ENCODE measurements at regions of chr5 and their contacts with region 1.

Region 1: DNA sequence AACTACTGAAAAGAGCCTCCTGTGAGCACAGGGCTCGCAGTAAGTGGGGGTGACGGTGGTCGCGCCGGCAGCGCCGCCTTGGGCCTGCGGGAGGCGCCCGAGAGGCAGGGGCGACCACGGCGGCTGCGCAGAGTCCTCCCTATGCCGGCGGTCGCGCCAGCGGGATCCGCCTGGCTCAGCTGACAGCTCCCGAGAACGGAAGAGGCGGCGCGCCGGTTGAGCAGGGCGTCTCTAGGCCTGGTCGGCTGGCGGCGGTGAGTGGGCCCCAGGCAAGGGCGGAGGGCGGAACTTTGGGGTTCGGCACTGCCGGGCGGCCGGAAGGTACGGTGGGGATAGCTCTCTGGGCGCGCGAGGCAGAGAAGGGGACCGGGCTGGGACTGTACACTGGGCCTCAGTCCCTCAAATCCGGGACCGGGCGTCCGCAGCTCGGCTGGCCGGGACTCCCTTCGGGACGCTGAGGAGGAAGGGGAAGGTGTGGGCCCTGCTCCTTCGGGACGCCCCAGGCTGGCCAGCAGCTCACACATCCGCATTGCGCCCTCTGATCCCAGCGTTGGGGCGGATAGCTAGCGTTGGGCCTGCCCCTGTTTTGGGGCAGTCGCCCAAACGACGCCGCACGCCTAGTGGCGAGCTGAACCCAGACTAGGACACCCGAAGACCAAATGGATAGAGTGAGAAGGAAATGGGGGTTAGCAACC is at the start of gene RNF14:
- DNase-seq: peak; percentile 92 to 94 (median 93)
- H3K4me3 ChIP-seq: peak within 1 kb of the TSS; percentile 66 to 85
- H3K4me3 Mint-ChIP-seq: peak within 1 kb of the TSS; percentile 87 to 98 (median 94)
- H3K27ac ChIP-seq: peak within 1 kb of the TSS; percentile 96
- H3K27ac Mint-ChIP-seq: peak within 1 kb of the TSS; percentile 97 to 99 (median 98)
- H3K4me1 ChIP-seq: peaks cover 23% of the 10 kb centered on the region
- H3K4me1 Mint-ChIP-seq: peaks cover 20 to 42% (median 30%) of the 10 kb centered on the region in 4 donors
- H3K27me3 ChIP-seq: no peaks in the 10 kb centered on the region
- H3K27me3 Mint-ChIP-seq: no peaks in the 10 kb centered on the region
- total RNA-seq, gene RNF14: 35.4 to 38.5 TPM

Region 2: GRCh38 chr5:141664732-141665461 is 304.2 kb before region 1 on chr5:
- CTCF ChIA-PET with region 1: interaction called, 4 read pairs
- POLR2A ChIA-PET with region 1: no interaction called
- intact Hi-C with region 1: loop called (anchors 2 kb)
- DNase-seq: peak; percentile 58 to 69 (median 59)
- H3K4me3 ChIP-seq: no peak overlapping the region
- H3K4me3 Mint-ChIP-seq: no peak overlapping the region
- H3K27ac ChIP-seq: no peak overlapping the region
- H3K27ac Mint-ChIP-seq: no peak overlapping the region
- H3K4me1 ChIP-seq: no peaks in the 10 kb centered on the region
- H3K4me1 Mint-ChIP-seq: peaks cover 2 to 5% (median 4%) of the 10 kb centered on the region in 4 donors
- H3K27me3 ChIP-seq: no peaks in the 10 kb centered on the region
- H3K27me3 Mint-ChIP-seq: no peaks in the 10 kb centered on the region

Region 3: GRCh38 chr5:141849375-141850243 is 119.5 kb before region 1 on chr5:
- CTCF ChIA-PET with region 1: interaction called, 4 read pairs
- POLR2A ChIA-PET with region 1: interaction called, 12 read pairs
- intact Hi-C with region 1: no loop called
- DNase-seq: peak; percentile 54 to 74 (median 56)
- H3K4me3 ChIP-seq: peak overlapping the region; percentile 83 to 88
- H3K4me3 Mint-ChIP-seq: peak overlapping the region; percentile 90 to 93 (median 92)
- H3K27ac ChIP-seq: peak overlapping the region; percentile 66
- H3K27ac Mint-ChIP-seq: peak overlapping the region; percentile 75 to 93 (median 88)
- H3K4me1 ChIP-seq: peaks cover 9% of the 10 kb centered on the region
- H3K4me1 Mint-ChIP-seq: peaks cover 5 to 14% (median 11%) of the 10 kb centered on the region in 4 donors
- H3K27me3 ChIP-seq: no peaks in the 10 kb centered on the region
- H3K27me3 Mint-ChIP-seq: peaks cover 1 to 5% of the 10 kb centered on the region in 2 donors

Region 4: GRCh38 chr5:141903261-141903660 is 65.8 kb before region 1 on chr5:
- CTCF ChIA-PET with region 1: no interaction called
- POLR2A ChIA-PET with region 1: no interaction called
- intact Hi-C with region 1: no loop called
- DNase-seq: no peak
- H3K4me3 ChIP-seq: no peak overlapping the region
- H3K4me3 Mint-ChIP-seq: no peak overlapping the region
- H3K27ac ChIP-seq: no peak overlapping the region
- H3K27ac Mint-ChIP-seq: no peak overlapping the region
- H3K4me1 ChIP-seq: no peaks in the 10 kb centered on the region
- H3K4me1 Mint-ChIP-seq: no peaks in the 10 kb centered on the region
- H3K27me3 ChIP-seq: no peaks in the 10 kb centered on the region
- H3K27me3 Mint-ChIP-seq: peaks cover 3 to 15% of the 10 kb centered on the region in 2 donors

Region 5: DNA sequence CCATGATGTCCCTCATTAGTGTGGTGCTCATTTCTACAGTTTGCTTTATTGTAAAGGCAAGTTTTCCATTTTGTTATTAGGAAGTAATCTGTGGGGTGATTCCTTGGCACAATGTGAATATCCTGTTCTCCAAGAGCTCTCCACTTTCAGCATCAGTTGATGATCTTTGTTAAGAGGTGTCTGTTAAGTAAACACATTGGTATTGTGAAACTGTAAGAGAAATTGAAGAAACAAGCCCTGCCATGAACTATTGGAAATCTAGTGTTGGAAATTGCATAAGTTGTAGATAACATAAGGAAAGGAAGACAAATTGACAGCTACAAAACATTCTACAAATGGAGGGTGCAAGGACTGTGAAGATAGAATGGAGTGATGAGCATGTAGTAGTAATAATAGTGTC is 17.0 kb after region 1 on chr5:
- CTCF ChIA-PET with region 1: interaction called, 39 read pairs
- POLR2A ChIA-PET with region 1: interaction called, 4 read pairs
- intact Hi-C with region 1: no loop called
- DNase-seq: no peak
- H3K4me3 ChIP-seq: no peak overlapping the region
- H3K4me3 Mint-ChIP-seq: no peak overlapping the region
- H3K27ac ChIP-seq: no peak overlapping the region
- H3K27ac Mint-ChIP-seq: peak overlapping the region in 2 of 7 donors; percentile 7 to 17
- H3K4me1 ChIP-seq: no peaks in the 10 kb centered on the region
- H3K4me1 Mint-ChIP-seq: peaks cover 0 to 7% (median 3%) of the 10 kb centered on the region in 4 donors
- H3K27me3 ChIP-seq: no peaks in the 10 kb centered on the region
- H3K27me3 Mint-ChIP-seq: no peaks in the 10 kb centered on the region

Region 6: GRCh38 chr5:142024771-142025304 is 55.8 kb after region 1 on chr5:
- CTCF ChIA-PET with region 1: interaction called, 7 read pairs
- POLR2A ChIA-PET with region 1: interaction called, 22 read pairs
- intact Hi-C with region 1: no loop called
- DNase-seq: peak; percentile 78 to 86 (median 81)
- H3K4me3 ChIP-seq: peak overlapping the region; percentile 37 to 52
- H3K4me3 Mint-ChIP-seq: peak overlapping the region; percentile 84 to 94 (median 88)
- H3K27ac ChIP-seq: peak overlapping the region; percentile 57
- H3K27ac Mint-ChIP-seq: peak overlapping the region; percentile 93 to 99 (median 98)
- H3K4me1 ChIP-seq: peaks cover 13% of the 10 kb centered on the region
- H3K4me1 Mint-ChIP-seq: peaks cover 16 to 23% (median 19%) of the 10 kb centered on the region in 4 donors
- H3K27me3 ChIP-seq: no peaks in the 10 kb centered on the region
- H3K27me3 Mint-ChIP-seq: no peaks in the 10 kb centered on the region

Region 7: GRCh38 chr5:142034994-142035393 is 65.9 kb after region 1 on chr5:
- CTCF ChIA-PET with region 1: no interaction called
- POLR2A ChIA-PET with region 1: no interaction called
- intact Hi-C with region 1: no loop called
- DNase-seq: no peak
- H3K4me3 ChIP-seq: no peak overlapping the region
- H3K4me3 Mint-ChIP-seq: peak overlapping the region in 6 of 8 donors; percentile 4 to 49 (median 16)
- H3K27ac ChIP-seq: no peak overlapping the region
- H3K27ac Mint-ChIP-seq: peak overlapping the region; percentile 7 to 74 (median 71)
- H3K4me1 ChIP-seq: peaks cover 13% of the 10 kb centered on the region
- H3K4me1 Mint-ChIP-seq: peaks cover 12 to 20% (median 16%) of the 10 kb centered on the region in 4 donors
- H3K27me3 ChIP-seq: no peaks in the 10 kb centered on the region
- H3K27me3 Mint-ChIP-seq: no peaks in the 10 kb centered on the region

Region 8: DNA sequence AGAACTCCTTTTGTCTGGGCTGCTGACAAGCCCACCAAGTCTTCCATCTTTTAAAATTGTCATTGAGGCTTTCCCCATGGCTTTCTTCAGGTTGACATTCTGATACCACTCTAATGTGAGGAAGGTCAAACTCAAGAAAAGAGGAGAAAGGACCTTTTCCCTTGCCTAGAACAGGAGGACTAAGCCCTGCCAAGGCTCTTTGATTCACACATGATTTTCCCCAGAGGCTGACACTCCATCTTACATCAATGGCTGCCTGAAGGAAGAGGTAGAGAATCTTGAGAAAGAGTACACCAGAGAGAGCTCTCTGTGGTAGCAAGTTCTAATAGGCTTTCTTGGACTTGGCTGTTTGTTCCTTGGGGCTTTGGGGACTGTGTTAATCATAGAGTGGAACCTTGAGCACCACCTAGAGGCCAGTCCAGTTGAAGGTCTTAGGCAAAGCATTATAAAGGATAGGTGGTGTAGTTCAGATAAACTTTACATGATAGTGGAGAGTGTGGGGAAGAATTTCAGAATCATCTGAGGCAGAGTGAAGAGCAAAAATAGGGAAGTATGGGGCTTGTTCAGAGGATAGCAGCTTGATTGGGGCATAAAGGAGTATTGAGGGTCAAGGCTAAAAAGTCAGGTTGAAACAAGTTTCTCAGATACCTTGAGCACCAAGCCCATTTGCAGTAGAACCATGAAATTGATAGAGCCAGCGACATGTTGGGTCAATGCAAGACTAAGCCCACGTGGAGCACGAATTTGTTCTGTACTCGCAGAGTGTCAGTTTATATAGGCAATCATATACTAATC is 176.2 kb after region 1 on chr5:
- CTCF ChIA-PET with region 1: interaction called, 17 read pairs
- POLR2A ChIA-PET with region 1: no interaction called
- intact Hi-C with region 1: no loop called
- DNase-seq: peak; percentile 54 to 66 (median 57)
- H3K4me3 ChIP-seq: no peak overlapping the region
- H3K4me3 Mint-ChIP-seq: no peak overlapping the region
- H3K27ac ChIP-seq: no peak overlapping the region
- H3K27ac Mint-ChIP-seq: no peak overlapping the region
- H3K4me1 ChIP-seq: no peaks in the 10 kb centered on the region
- H3K4me1 Mint-ChIP-seq: no peaks in the 10 kb centered on the region
- H3K27me3 ChIP-seq: no peaks in the 10 kb centered on the region
- H3K27me3 Mint-ChIP-seq: no peaks in the 10 kb centered on the region

Region 9: GRCh38 chr5:142201471-142201887 is 232.4 kb after region 1 on chr5:
- CTCF ChIA-PET with region 1: no interaction called
- POLR2A ChIA-PET with region 1: no interaction called
- intact Hi-C with region 1: no loop called
- DNase-seq: no peak
- H3K4me3 ChIP-seq: no peak overlapping the region
- H3K4me3 Mint-ChIP-seq: no peak overlapping the region
- H3K27ac ChIP-seq: no peak overlapping the region
- H3K27ac Mint-ChIP-seq: no peak overlapping the region
- H3K4me1 ChIP-seq: no peaks in the 10 kb centered on the region
- H3K4me1 Mint-ChIP-seq: no peaks in the 10 kb centered on the region
- H3K27me3 ChIP-seq: no peaks in the 10 kb centered on the region
- H3K27me3 Mint-ChIP-seq: peaks cover 0 to 1% of the 10 kb centered on the region in 2 donors

Region 10: GRCh38 chr5:142492781-142493281 is 523.8 kb after region 1 on chr5:
- CTCF ChIA-PET with region 1: no interaction called
- POLR2A ChIA-PET with region 1: no interaction called
- intact Hi-C with region 1: no loop called
- DNase-seq: no peak
- H3K4me3 ChIP-seq: no peak overlapping the region
- H3K4me3 Mint-ChIP-seq: peak overlapping the region in 1 of 8 donors; percentile 30
- H3K27ac ChIP-seq: no peak overlapping the region
- H3K27ac Mint-ChIP-seq: peak overlapping the region in 3 of 7 donors; percentile 16 to 51 (median 25)
- H3K4me1 ChIP-seq: no peaks in the 10 kb centered on the region
- H3K4me1 Mint-ChIP-seq: peaks cover 0 to 3% (median 0%) of the 10 kb centered on the region in 4 donors
- H3K27me3 ChIP-seq: no peaks in the 10 kb centered on the region
- H3K27me3 Mint-ChIP-seq: peaks cover 0 to under 1% of the 10 kb centered on the region in 2 donors

Measured in CD4-positive, alpha-beta memory T cell (primary cell).